PC-9 (cell line): ENCODE measurements at regions of chr1 and their contacts with region 1.

Region 1: GRCh38 chr1:100265931-100266740 is at the start of gene RTCA:
- DNase-seq: peak; percentile 91 to 92
- H3K4me3 ChIP-seq: peak within 1 kb of the TSS; percentile 76
- H3K27ac ChIP-seq: peak within 1 kb of the TSS; percentile 44
- H3K4me1 ChIP-seq: peaks cover 14% of the 10 kb centered on the region
- H3K27me3 ChIP-seq: no peaks in the 10 kb centered on the region
- CTCF ChIP-seq: no peak
- total RNA-seq, gene RTCA: 32.9 and 38.1 TPM in 2 replicates

Region 2: GRCh38 chr1:100132566-100133477 is 133.3 kb before region 1 on chr1 and contains the starts of genes SASS6 and TRMT13:
- CTCF ChIA-PET with region 1: interaction called, 4 read pairs
- POLR2A ChIA-PET with region 1: no interaction called
- intact Hi-C with region 1: loop called (anchors 2 kb)
- DNase-seq: peak; percentile 91 to 98
- H3K4me3 ChIP-seq: peak within 1 kb of the TSS; percentile 87
- H3K27ac ChIP-seq: peak within 1 kb of the TSS; percentile 40
- H3K4me1 ChIP-seq: peaks cover 34% of the 10 kb centered on the region
- H3K27me3 ChIP-seq: no peaks in the 10 kb centered on the region
- CTCF ChIP-seq: no peak
- total RNA-seq, gene SASS6: 5.1 and 8.7 TPM in 2 replicates
- total RNA-seq, gene TRMT13: 7.3 and 14.2 TPM in 2 replicates

Region 3: DNA sequence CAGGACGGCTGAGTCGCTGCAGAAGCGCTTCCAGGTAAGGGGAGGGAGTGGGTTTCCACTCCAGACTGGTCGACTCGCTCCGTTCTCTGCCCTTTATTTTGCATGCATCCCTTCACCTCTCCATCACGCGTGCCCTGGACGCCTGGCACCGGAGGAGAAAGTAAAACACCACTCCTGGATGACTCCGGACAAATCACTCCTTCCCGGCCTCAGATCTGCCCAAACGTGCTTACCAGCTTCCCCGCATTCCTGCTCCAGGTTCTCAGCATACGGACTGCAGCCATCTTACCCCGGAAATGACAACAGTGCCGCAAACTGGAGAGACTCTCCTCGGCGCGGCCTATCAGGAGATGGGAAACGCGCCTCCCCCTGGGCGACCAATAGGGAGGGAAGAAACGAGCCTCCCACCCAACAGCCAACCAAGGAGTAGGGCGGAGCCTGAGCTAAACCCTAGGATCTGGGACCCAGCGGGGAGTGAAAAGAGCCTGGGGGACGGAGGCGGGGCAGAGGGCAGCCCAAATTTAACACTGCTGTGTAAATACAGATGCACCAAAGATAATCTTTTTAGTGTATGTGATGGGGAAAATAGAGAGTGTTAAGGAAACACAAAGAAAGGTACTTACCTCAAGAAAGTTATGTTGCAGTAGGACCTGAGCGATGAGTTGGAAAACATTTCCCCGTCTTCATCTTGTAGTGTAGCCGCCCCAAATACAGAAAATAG is 16.4 kb before region 1 on chr1 and contains the start of gene DBT:
- CTCF ChIA-PET with region 1: interaction called, 3 read pairs
- POLR2A ChIA-PET with region 1: interaction called, 4 read pairs
- intact Hi-C with region 1: loop called (anchors 1 kb)
- DNase-seq: peak; percentile 91 to 97
- H3K4me3 ChIP-seq: peak within 1 kb of the TSS; percentile 62
- H3K27ac ChIP-seq: peak within 1 kb of the TSS; percentile 37
- H3K4me1 ChIP-seq: peaks cover 16% of the 10 kb centered on the region
- H3K27me3 ChIP-seq: no peaks in the 10 kb centered on the region
- CTCF ChIP-seq: no peak
- total RNA-seq, gene DBT: 13.9 and 16.0 TPM in 2 replicates

Region 4: GRCh38 chr1:100277866-100278265 is 11.7 kb after region 1 on chr1:
- CTCF ChIA-PET with region 1: no interaction called
- POLR2A ChIA-PET with region 1: no interaction called
- intact Hi-C with region 1: loop called (anchors 1 kb)
- DNase-seq: no peak
- H3K4me3 ChIP-seq: no peak overlapping the region
- H3K27ac ChIP-seq: no peak overlapping the region
- H3K4me1 ChIP-seq: no peaks in the 10 kb centered on the region
- H3K27me3 ChIP-seq: no peaks in the 10 kb centered on the region
- CTCF ChIP-seq: no peak

Region 5: DNA sequence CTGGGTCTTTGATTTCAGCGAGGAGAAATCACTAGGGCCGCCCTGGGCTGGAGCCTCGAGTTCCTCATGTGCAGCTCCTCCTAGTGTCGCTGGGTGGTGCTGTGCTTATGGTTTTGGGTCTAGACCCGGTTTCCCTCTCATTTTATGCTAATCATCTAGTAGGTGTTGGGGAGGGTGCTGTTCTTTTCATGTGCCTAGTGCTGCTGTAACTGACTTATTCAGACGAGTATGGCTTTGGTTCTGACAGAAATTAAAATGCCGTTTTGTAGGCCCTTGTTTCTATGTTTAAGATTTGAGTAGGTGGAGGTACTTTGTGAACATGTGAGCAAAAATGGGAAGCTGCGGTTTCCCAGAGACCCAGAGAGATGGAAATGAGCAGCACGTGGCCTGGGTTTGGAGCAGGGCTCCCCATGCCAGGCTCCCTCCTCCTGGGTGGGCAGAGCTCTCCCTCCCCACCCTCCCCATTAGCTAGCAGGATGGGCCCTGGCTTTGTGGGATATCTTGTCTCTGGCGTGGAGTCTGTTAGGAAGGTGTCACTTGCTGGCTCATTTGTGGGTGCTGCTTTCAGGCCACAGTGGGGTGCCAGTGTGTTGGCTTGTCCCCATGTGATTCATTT is 197.8 kb after region 1 on chr1:
- CTCF ChIA-PET with region 1: no interaction called
- POLR2A ChIA-PET with region 1: no interaction called
- intact Hi-C with region 1: no loop called
- DNase-seq: peak; percentile 43 to 58
- H3K4me3 ChIP-seq: no peak overlapping the region
- H3K27ac ChIP-seq: no peak overlapping the region
- H3K4me1 ChIP-seq: no peaks in the 10 kb centered on the region
- H3K27me3 ChIP-seq: no peaks in the 10 kb centered on the region
- CTCF ChIP-seq: peak; percentile 96